A549 (cell line): ENCODE measurements at regions of chr16 and their contacts with region 1.

Region 1: DNA sequence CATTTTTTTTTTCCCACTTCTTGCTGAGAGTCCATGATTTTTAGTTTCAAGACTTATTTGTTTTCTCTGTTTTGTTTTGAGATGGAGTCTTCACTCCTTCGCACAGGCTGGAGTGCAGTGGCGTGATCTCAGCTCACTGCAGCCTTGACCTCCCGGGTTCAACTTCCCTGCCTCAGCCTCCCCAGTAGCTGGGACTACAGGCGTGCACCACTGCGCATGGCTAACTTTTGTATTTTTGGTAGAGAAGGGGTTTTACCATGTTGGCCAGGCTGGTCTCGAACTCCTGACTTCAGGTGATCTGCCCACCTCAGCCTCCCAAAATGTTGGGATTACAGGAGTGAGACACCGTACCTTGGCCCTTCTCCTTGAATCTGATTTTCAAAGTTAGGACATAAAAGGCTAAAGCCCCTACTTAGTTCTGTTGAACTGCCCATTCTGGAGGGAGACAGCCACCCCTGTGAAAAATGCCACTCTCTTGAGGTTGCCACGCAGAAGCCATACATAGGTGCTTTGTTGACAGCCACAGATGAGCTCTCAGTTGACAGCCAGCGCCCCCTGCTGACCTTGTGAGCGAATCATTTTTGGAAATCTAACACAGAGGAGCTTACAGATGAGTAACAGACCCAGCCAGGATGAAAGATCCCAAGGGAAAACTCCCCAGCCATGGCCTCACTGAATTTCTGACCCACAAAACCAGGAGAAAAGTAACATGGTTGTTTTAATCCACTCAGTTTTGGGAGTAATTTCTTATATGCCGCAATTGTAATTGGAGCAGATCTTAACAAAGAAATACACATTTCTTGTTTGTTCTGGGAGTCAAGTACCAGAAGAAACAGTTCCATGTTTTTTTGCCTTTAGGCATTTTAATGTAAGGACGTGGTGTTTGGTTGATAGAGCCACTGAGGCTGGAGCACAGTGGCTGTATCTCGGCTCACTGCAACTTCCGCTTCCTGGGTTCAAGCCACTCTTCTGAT is 38.8 kb downstream of the PKD1L3 start:
- DNase-seq: peak; percentile 77 to 88
- ATAC-seq: peak; percentile 98 to 99
- H3K4me3 ChIP-seq: no peak overlapping the region
- H3K27ac ChIP-seq: no peak overlapping the region
- H3K4me1 ChIP-seq: no peaks in the 10 kb centered on the region
- CTCF ChIP-seq: peak; percentile 79
- EP300 ChIP-seq: no peak
- POLR2A ChIP-seq: no peak
- RAD21 ChIP-seq: peak; percentile 81 to 91

Region 2: DNA sequence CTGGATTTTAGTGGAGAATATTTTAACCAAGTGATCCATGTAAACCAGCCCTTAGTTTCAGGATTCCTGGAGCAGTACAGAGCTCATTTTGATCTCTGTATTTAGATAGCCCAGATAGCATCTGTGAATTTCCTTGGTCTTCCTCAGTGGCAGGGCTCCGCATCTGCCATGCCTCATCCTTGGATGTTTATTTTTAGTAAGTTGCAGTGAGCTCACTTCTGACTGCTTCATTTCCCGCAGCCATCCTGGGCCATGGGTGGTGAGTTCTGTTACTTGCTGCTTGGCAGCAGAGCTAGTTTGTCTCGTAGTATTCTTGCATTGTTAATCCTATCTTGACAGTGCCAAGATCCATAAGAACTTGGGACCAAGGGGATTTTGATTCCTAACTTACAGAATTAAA is 32.3 kb before region 1 on chr16:
- CTCF ChIA-PET with region 1: interaction called, 12 read pairs
- POLR2A ChIA-PET with region 1: no interaction called
- DNase-seq: no peak
- ATAC-seq: no peak
- H3K4me3 ChIP-seq: no peak overlapping the region
- H3K27ac ChIP-seq: no peak overlapping the region
- H3K4me1 ChIP-seq: peaks cover 8% of the 10 kb centered on the region; the same call in 1 of the 3 replicates
- CTCF ChIP-seq: no peak
- EP300 ChIP-seq: no peak
- POLR2A ChIP-seq: no peak
- RAD21 ChIP-seq: no peak

Region 3: GRCh38 chr16:71974068-71974818 is 12.9 kb after region 1 on chr16:
- CTCF ChIA-PET with region 1: interaction called, 13 read pairs
- POLR2A ChIA-PET with region 1: no interaction called
- DNase-seq: no peak
- ATAC-seq: no peak
- H3K4me3 ChIP-seq: no peak overlapping the region
- H3K27ac ChIP-seq: no peak overlapping the region
- H3K4me1 ChIP-seq: no peaks in the 10 kb centered on the region
- CTCF ChIP-seq: no peak
- EP300 ChIP-seq: no peak
- POLR2A ChIP-seq: no peak
- RAD21 ChIP-seq: no peak